ENCODE measurements at regions of chr11 and their contacts with region 1.

Region 1: DNA sequence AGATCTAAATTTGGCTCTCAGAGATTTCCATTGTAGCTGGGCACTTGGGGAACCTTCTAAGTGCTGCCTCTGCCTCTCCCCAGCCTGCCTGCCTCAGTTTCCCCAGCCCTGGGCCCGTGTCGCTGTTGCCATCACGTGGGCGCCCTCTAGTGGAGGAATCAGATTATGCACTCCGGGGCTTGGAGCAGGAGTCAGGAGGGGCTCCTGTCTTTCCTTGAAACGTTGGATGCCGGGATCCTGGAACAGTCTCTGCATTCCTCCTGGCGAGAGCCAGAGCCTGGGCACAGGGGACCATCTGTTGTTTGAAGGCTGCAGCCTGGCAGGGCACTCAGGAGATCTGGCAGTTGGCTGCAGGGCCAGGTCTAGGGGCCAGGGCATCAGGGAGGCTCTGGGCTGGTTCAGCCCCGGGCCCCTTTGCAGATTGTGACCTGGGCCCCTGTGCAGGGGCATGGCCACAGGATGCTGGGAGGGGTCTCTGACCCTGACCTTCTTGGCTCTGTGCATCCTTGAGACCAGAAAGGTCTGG is 71.6 kb downstream of the LRP5 start:
- DNase-seq: peak; percentile 32
- ATAC-seq: no peak
- H3K4me3 ChIP-seq: no peak overlapping the region
- H3K27ac ChIP-seq: peak overlapping the region; percentile 75; the same call in 1 of the 2 replicates
- H3K4me1 ChIP-seq: peaks cover 50% of the 10 kb centered on the region
- H3K27me3 ChIP-seq: no peaks in the 10 kb centered on the region
- CTCF ChIP-seq: peak; percentile 99

Region 2: GRCh38 chr11:68408512-68408911 is 24.5 kb after region 1 on chr11:
- CTCF ChIA-PET with region 1: interaction called, 13 read pairs
- POLR2A ChIA-PET with region 1: no interaction called
- in situ Hi-C with region 1: no loop called
- intact Hi-C with region 1: no loop called
- DNase-seq: no peak
- ATAC-seq: no peak
- H3K4me3 ChIP-seq: no peak overlapping the region
- H3K27ac ChIP-seq: no peak overlapping the region
- H3K4me1 ChIP-seq: no peaks in the 10 kb centered on the region
- H3K27me3 ChIP-seq: no peaks in the 10 kb centered on the region
- CTCF ChIP-seq: no peak